Adrenal gland (tissue), 19 donors: ENCODE measurements at regions of chr6 and their contacts with region 1.

Region 1: DNA sequence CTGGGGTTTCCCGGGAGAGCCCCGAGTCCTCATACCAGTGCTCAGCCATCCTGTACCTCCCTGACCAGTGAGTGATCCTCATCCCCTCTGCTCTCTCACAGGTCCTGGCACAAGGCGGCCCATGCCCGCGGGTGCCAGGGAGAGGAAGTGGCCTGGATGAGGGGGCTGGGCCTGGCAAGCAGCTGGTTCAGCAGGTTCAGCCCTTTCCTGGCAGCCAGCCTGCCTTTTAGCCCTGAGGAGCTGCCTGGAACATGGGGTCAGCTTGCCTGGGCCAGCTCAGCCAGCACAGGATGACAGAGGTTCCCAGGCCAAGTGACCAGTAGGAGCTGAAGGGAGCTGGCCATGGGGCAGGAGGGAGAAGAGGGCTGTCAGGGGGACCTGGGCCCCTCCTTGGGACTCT is 10.8 kb downstream of the MOCS1 start:
- DNase-seq: peak in 5 of 7 donors; percentile 89 to 98 (median 91)
- H3K4me3 ChIP-seq: no peak overlapping the region
- H3K27ac ChIP-seq: peak overlapping the region in 3 of 5 donors; percentile 22 to 55 (median 44)
- H3K4me1 ChIP-seq: peaks cover 8 to 19% of the 10 kb centered on the region in 2 donors
- H3K27me3 ChIP-seq: no peaks in the 10 kb centered on the region
- CTCF ChIP-seq: no peak
- POLR2A ChIP-seq: no peak

Region 2: DNA sequence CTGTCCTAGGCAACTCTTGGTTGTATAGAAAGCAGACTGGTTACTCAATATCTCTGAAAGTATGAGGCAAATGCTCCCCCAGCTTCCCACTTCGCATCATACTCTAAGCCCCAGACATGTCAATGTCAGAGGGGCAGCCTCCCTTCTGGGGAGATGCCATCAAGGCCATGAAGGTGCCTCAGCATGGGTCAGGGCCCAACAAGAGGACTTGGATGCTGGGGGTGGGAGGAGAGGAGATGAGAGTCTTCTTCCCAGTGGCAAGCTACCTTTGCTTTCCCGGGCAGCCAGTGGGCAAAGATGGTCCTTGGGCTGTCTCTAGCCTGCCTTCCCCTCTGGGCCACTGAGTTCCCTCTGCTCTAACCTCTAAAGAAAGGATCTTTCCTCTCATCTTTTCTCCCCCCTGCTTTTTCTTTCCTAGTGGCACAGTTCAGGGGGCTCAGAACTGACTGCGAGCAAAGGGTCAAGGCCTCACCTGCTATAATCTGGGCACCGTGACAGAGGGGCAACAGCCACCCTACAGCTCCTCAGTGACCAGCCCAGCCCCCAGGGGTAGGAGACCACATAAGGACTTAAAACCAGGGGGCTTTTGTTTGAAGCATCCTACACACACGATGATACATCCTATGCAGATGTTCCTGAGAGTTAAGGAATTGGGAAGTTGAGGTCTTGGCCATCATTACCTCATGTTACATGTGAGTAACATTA is 15.4 kb before region 1 on chr6:
- intact Hi-C with region 1: loop called in 1 of 2 experiments (anchors 2 kb)
- DNase-seq: no peak
- H3K4me3 ChIP-seq: no peak overlapping the region
- H3K27ac ChIP-seq: no peak overlapping the region
- H3K4me1 ChIP-seq: no peaks in the 10 kb centered on the region
- H3K27me3 ChIP-seq: no peaks in the 10 kb centered on the region
- CTCF ChIP-seq: no peak
- POLR2A ChIP-seq: no peak